ENCODE measurements at regions of chr1 and their contacts with region 1.

Region 1: GRCh38 chr1:47527658-47528255 is 89.9 kb downstream of the FOXD2 start:
- DNase-seq: peak; percentile 77
- H3K4me3 ChIP-seq: no peak overlapping the region
- H3K27ac ChIP-seq: no peak overlapping the region
- H3K4me1 ChIP-seq: no peaks in the 10 kb centered on the region
- H3K27me3 ChIP-seq: no peaks in the 10 kb centered on the region
- CTCF ChIP-seq: peak; percentile 41

Region 2: GRCh38 chr1:47211796-47212269 is 315.9 kb before region 1 on chr1:
- intact Hi-C with region 1: no loop called
- DNase-seq: peak; percentile 28
- H3K4me3 ChIP-seq: no peak overlapping the region
- H3K27ac ChIP-seq: no peak overlapping the region
- H3K4me1 ChIP-seq: no peaks in the 10 kb centered on the region
- H3K27me3 ChIP-seq: no peaks in the 10 kb centered on the region
- CTCF ChIP-seq: no peak

Region 3: DNA sequence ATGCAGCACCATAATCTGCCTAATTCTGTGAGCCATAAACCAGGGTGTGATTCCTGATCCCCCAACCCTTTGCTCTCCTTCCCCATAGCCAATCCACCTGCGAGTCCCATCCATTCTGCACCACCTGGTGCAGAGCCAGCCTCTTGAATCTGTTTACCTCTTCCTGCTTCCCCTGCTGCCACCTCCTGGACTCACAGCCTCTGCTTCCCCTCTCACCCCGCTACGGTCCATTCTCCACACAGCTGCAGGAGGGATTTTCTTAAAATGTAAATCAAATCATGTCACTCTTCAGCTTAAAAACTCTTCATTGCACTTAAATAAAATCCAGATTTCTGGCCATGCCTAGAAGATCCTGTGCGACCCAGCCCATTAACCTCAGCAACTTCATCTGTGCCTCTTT is 96.8 kb after region 1 on chr1:
- intact Hi-C with region 1: loop called (anchors 5 kb)
- DNase-seq: peak; percentile 58
- H3K4me3 ChIP-seq: no peak overlapping the region
- H3K27ac ChIP-seq: no peak overlapping the region
- H3K4me1 ChIP-seq: no peaks in the 10 kb centered on the region
- H3K27me3 ChIP-seq: no peaks in the 10 kb centered on the region
- CTCF ChIP-seq: no peak

Region 4: GRCh38 chr1:47710329-47711071 is 182.7 kb after region 1 on chr1:
- intact Hi-C with region 1: loop called (anchors 5 kb)
- DNase-seq: peak; percentile 83
- H3K4me3 ChIP-seq: peak overlapping the region; percentile 41
- H3K27ac ChIP-seq: peak overlapping the region; percentile 60
- H3K4me1 ChIP-seq: no peaks in the 10 kb centered on the region
- H3K27me3 ChIP-seq: peaks cover 9% of the 10 kb centered on the region
- CTCF ChIP-seq: peak; percentile 98